ENCODE measurements at regions of chr6 and their contacts with region 1.

Region 1: GRCh38 chr6:144411332-144412190 is 126.4 kb downstream of the UTRN start:
- DNase-seq: peak in 3 of 9 donors; percentile 6 to 20 (median 7)
- ATAC-seq: no peak
- H3K4me3 ChIP-seq: no peak overlapping the region
- H3K4me3 Mint-ChIP-seq: peak overlapping the region; percentile 39 to 87 (median 69)
- H3K27ac ChIP-seq: no peak overlapping the region
- H3K27ac Mint-ChIP-seq: peak overlapping the region; percentile 11 to 87 (median 68)
- H3K4me1 ChIP-seq: peaks cover 14 to 22% of the 10 kb centered on the region in 2 donors
- H3K4me1 Mint-ChIP-seq: peaks cover 34 to 86% (median 66%) of the 10 kb centered on the region in 7 donors
- H3K27me3 ChIP-seq: no peaks in the 10 kb centered on the region
- H3K27me3 Mint-ChIP-seq: no peaks in the 10 kb centered on the region

Region 2: DNA sequence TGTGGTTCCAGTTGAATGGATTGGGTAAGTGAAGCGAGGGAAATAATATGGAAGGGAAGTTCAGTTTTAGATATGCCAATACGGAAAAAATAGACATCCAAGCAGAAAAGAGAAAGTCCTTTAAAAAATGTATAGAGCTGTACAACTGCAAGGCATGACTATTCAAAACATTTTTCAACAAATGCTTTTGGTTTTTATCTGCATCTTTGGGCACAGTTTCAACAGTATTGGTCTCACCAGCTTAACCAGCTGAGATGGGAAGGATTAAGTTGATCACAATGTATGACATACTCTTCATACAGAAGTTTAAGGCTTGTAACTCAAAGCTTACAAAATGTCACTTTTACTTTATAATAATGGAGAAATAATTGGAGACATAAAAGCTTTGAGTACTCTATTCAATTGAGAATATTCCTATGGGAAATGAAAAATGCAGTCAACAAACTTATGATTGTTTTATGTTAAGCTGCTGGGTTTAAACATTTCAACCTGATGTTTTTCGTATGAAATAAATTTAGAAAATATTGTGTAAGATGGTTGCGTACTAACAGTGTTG is 142.7 kb before region 1 on chr6:
- CTCF ChIA-PET with region 1: no interaction called
- POLR2A ChIA-PET with region 1: no interaction called
- intact Hi-C with region 1: no loop called
- DNase-seq: no peak
- ATAC-seq: no peak
- H3K4me3 ChIP-seq: no peak overlapping the region
- H3K4me3 Mint-ChIP-seq: no peak overlapping the region
- H3K27ac ChIP-seq: no peak overlapping the region
- H3K27ac Mint-ChIP-seq: no peak overlapping the region
- H3K4me1 ChIP-seq: no peaks in the 10 kb centered on the region
- H3K4me1 Mint-ChIP-seq: no peaks in the 10 kb centered on the region
- H3K27me3 ChIP-seq: no peaks in the 10 kb centered on the region
- H3K27me3 Mint-ChIP-seq: peaks cover 0 to 2% (median 0%) of the 10 kb centered on the region in 5 donors

Region 3: GRCh38 chr6:144321839-144322591 is 89.5 kb before region 1 on chr6:
- CTCF ChIA-PET with region 1: no interaction called
- POLR2A ChIA-PET with region 1: no interaction called
- intact Hi-C with region 1: no loop called
- DNase-seq: no peak
- ATAC-seq: no peak
- H3K4me3 ChIP-seq: no peak overlapping the region
- H3K4me3 Mint-ChIP-seq: peak overlapping the region in 1 of 10 donors; percentile 34
- H3K27ac ChIP-seq: no peak overlapping the region
- H3K27ac Mint-ChIP-seq: no peak overlapping the region
- H3K4me1 ChIP-seq: no peaks in the 10 kb centered on the region
- H3K4me1 Mint-ChIP-seq: peaks cover 0 to 20% (median 10%) of the 10 kb centered on the region in 7 donors
- H3K27me3 ChIP-seq: no peaks in the 10 kb centered on the region
- H3K27me3 Mint-ChIP-seq: peaks cover 0 to 12% (median 0%) of the 10 kb centered on the region in 5 donors

Region 4: DNA sequence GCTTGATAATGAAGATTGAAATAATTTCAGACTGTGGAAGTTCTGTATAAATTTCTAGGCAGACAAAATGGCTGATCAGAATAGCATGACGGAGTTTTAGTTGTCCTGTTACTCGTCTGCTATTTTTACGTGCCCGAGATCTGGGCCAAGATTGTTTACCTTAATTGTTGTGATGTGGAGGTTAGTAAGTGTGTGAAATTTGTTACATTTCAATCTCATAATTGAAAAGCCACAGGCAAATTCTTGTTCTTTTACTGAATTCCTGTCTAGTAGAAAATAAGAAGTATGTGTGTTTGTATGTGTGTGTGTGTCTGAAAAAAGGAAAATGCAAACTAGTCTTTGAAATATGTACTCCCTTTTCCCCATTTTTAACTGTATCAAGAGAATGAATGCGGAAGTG is 11.2 kb before region 1 on chr6:
- CTCF ChIA-PET with region 1: no interaction called
- POLR2A ChIA-PET with region 1: interaction called, 3 read pairs
- intact Hi-C with region 1: loop called in 1 of 2 experiments (anchors 2 kb)
- DNase-seq: no peak
- ATAC-seq: no peak
- H3K4me3 ChIP-seq: no peak overlapping the region
- H3K4me3 Mint-ChIP-seq: peak overlapping the region in 1 of 10 donors; percentile 25
- H3K27ac ChIP-seq: no peak overlapping the region
- H3K27ac Mint-ChIP-seq: peak overlapping the region in 1 of 9 donors; percentile 28
- H3K4me1 ChIP-seq: peaks cover under 1 to 6% of the 10 kb centered on the region in 2 donors
- H3K4me1 Mint-ChIP-seq: peaks cover 6 to 67% (median 65%) of the 10 kb centered on the region in 7 donors
- H3K27me3 ChIP-seq: no peaks in the 10 kb centered on the region
- H3K27me3 Mint-ChIP-seq: no peaks in the 10 kb centered on the region

Region 5: DNA sequence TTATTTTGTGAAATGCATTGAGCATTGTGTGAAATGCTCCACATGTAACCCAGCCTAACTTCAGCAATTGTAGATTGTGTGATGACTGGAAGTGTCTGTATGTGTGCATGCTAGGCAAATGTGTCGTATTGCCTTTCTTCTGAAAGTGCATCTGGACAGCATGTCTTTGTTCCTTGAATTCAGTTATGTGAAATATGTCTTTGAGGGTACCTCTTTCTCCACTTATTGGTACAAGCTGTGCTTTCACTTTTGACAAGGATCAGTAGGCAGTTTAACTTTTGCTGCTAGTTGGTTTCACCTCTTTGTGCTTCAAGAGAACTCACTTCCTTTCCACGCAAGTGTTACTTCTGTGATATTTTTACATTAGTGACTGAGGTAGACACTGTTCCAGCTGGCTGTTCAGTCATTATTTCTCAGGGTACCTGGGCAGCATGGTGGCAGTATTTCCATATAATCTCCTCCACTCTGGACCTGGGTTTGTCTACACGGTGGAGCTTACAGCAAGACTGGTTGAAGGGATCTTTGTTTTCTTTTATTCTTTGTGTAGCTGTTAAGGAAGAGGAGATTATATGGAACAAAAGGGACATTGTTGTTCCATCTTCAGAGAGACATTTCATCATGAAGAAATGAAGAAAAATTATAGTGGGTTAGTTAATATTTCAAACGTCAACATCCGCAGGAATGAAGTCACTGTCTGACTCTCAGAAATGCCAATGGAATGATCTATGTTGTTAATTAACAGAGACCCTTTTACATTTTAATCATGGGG is 49.0 kb after region 1 on chr6:
- CTCF ChIA-PET with region 1: no interaction called
- POLR2A ChIA-PET with region 1: no interaction called
- intact Hi-C with region 1: no loop called
- DNase-seq: peak in 5 of 9 donors; percentile 15 to 39 (median 26)
- ATAC-seq: peak; percentile 74
- H3K4me3 ChIP-seq: no peak overlapping the region
- H3K4me3 Mint-ChIP-seq: peak overlapping the region in 9 of 10 donors; percentile 12 to 81 (median 69)
- H3K27ac ChIP-seq: peak overlapping the region; percentile 12
- H3K27ac Mint-ChIP-seq: peak overlapping the region; percentile 45 to 91 (median 87)
- H3K4me1 ChIP-seq: peaks cover 12 to 13% of the 10 kb centered on the region in 2 donors
- H3K4me1 Mint-ChIP-seq: peaks cover 8 to 37% (median 28%) of the 10 kb centered on the region in 7 donors
- H3K27me3 ChIP-seq: no peaks in the 10 kb centered on the region
- H3K27me3 Mint-ChIP-seq: no peaks in the 10 kb centered on the region

Measured in naive thymus-derived CD4-positive, alpha-beta T cell (primary cell).